Breast epithelium (tissue), 4 donors: ENCODE measurements at regions of chr3 and their contacts with region 1.

Region 1: DNA sequence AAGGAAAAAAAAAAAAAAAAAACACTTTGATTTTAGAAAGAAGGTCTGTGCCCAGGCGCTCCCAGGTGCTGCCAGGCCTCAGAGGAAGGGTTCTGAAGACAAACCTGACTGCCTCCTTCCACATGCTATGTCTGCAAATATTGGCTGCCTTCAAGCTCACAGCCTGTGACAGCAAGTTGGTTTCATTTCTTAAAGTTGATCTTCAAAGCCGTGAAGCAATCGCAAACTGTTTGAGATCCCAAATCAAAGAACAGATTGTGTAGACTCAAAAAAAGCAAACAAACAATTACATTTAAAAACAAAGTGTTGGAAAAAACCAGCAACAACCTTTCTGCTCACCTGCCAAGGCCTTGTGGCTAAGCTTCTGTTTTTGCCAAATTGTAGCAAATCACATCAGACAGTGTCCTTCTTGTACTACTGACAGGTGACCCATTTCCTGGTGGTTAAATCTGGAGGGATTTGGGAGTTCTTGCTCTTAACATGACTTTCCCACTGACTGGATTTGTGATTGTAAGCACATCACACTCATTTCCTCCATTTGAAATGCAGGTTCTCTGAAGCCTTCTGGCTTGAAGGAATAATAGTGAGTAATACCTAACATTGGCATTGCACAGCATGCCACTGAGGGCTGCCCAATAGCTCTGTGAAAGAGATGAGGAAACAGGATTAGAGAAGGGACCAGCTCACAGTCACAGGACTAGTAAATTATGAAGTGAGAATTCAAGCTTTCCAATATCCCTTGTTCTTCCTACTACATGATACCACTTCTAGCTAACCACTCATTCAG is 502.4 kb downstream of the LPP start:
- DNase-seq: peak in 1 of 2 donors; percentile 26
- H3K4me3 ChIP-seq: no peak overlapping the region
- H3K27ac ChIP-seq: peak overlapping the region; percentile 68 to 74
- H3K4me1 ChIP-seq: peaks cover 0 to 4% of the 10 kb centered on the region in 2 donors
- H3K27me3 ChIP-seq: no peaks in the 10 kb centered on the region
- CTCF ChIP-seq: no peak
- POLR2A ChIP-seq: no peak

Region 2: GRCh38 chr3:187974871-187975271 is 681.5 kb before region 1 on chr3:
- intact Hi-C with region 1: loop called (anchors 5 kb)
- DNase-seq: no peak
- H3K4me3 ChIP-seq: no peak overlapping the region
- H3K27ac ChIP-seq: no peak overlapping the region
- H3K4me1 ChIP-seq: no peaks in the 10 kb centered on the region
- H3K27me3 ChIP-seq: no peaks in the 10 kb centered on the region
- CTCF ChIP-seq: no peak
- POLR2A ChIP-seq: no peak

Region 3: DNA sequence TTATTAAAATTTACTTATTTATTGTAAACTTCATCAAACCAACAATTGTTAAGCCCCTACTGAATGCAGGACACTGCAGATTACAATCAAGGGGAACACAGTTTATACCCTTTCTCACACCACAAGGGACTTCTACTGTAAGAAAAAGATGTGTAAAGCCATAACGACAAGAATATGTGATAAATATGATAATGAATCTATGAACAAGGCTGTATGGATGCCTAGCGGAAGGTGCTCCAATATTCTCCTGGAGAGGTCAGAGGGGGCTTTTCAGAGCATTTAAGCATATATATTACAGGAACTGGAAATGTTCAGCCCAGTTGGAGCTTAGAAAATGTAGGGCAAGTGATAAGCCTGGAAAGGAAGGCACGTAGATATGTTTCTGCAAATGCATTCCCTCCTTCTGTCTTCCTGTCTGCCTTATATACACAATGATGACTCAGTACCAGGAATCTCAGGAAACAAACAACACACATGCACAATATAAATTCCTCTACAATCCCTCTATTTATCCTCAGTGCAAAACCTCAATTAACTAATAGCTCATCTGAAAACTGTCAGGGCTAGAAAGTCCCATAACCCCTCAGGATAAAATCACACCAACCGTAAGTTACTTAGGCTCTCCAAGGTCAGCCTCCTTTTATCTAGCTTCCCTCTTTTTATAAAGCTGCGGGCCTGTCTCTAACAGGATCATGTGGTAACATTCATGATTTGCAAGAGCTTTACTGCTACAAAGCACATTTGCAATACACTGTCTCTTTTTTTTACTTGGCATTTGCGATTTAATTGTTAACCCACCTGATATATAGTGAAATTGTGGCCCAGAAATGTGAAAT is 109.3 kb before region 1 on chr3:
- intact Hi-C with region 1: no loop called
- DNase-seq: no peak
- H3K4me3 ChIP-seq: no peak overlapping the region
- H3K27ac ChIP-seq: no peak overlapping the region
- H3K4me1 ChIP-seq: no peaks in the 10 kb centered on the region
- H3K27me3 ChIP-seq: no peaks in the 10 kb centered on the region
- CTCF ChIP-seq: no peak
- POLR2A ChIP-seq: no peak